ENCODE measurements at regions of chr6 and their contacts with region 1.

Region 1: DNA sequence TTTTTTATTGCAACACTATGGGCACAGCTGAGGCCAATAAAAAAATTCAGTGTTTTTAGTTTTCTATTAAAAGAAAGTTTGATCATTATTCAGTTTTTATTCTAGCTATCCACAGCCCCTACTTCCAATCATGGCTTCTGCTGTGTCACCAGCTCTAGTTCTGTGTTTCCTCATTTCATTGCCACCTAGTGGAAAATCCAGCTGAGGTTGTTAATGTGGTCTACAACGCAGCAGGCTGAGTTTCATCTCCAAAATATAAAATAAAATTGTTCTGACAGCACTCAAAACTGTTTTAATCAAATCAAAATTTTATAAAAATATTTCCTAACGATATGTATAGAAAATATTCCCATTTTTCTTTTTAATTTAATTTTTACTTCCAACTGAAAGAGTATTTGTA is 13.6 kb downstream of the COL9A1 start:
- DNase-seq: no peak
- H3K4me3 ChIP-seq: no peak overlapping the region
- CTCF ChIP-seq: no peak

Region 2: GRCh38 chr6:70253923-70254322 is 35.4 kb before region 1 on chr6:
- in situ Hi-C with region 1: loop called (anchors 5 kb)
- DNase-seq: no peak
- H3K4me3 ChIP-seq: no peak overlapping the region
- CTCF ChIP-seq: no peak

Region 3: DNA sequence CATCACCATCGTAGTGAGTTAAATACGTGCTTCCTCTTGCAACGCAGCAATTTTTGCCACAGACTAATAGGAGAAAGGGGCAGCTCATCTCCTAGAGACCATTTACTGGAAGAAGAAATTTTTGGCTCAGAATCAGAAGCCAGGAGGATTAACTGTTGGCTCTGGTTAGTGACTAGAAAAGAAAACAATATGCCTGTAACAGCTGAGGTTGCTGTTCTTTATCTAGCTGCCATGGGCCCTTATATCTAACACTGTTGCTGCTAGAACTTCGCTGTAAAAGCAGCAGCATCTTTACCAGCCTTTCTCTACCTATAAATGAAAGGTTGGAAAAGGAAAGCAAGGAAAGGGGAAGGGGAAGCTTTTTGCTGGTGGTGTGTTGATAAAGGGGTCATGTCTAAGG is 189.9 kb after region 1 on chr6:
- in situ Hi-C with region 1: no loop called
- DNase-seq: peak; percentile 53
- H3K4me3 ChIP-seq: no peak overlapping the region
- CTCF ChIP-seq: no peak

Measured in astrocyte of the cerebellum (primary cell).